Esophagus squamous epithelium (tissue), 5 donors: ENCODE measurements at regions of chr9 and their contacts with region 1.

Region 1: GRCh38 chr9:136539427-136540421 is 6.1 kb downstream of the NOTCH1 start:
- DNase-seq: peak; percentile 86
- H3K4me3 ChIP-seq: peak overlapping the region in 3 of 4 donors; percentile 5 to 57 (median 22)
- H3K27ac ChIP-seq: peak overlapping the region; percentile 85 to 94 (median 92)
- H3K4me1 ChIP-seq: peaks cover 65 to 97% (median 89%) of the 10 kb centered on the region in 3 donors
- H3K27me3 ChIP-seq: no peaks in the 10 kb centered on the region
- CTCF ChIP-seq: no peak
- POLR2A ChIP-seq: peak in 1 of 4 donors; percentile 62

Region 2: DNA sequence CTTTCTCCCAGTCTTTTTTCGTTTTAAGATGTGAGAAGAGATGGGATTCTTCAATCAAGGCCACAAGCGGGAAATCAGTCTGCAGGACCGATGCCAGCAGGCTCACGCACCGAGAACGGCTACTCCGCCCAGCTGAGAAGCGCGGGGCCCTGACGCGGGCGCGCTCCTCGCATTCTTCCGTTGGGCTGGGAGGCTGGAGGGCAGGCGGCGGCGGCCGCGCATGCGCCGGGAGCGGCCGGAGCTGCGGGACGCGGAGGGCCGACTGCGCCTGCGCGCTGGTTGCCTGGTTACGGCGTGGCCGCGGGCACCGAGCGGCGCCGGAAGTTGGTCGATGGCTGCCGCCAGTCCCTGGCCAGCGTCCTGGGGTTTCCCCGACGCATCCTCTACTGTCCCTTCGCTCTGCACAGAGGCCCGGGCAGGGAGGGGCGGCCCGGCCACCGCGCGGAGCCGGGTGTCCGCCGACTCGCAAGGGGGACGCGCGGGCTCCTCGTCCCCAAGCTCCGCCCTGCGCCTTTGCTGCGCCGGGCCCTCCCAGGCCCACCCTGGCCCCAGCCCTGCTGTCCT is 56.1 kb before region 1 on chr9:
- intact Hi-C with region 1: loop called (anchors 5 kb)
- DNase-seq: peak; percentile 79
- H3K4me3 ChIP-seq: peak overlapping the region; percentile 46 to 99 (median 79)
- H3K27ac ChIP-seq: peak overlapping the region; percentile 99 to 100 (median 100)
- H3K4me1 ChIP-seq: peaks cover 25 to 54% (median 28%) of the 10 kb centered on the region in 3 donors
- H3K27me3 ChIP-seq: peaks cover 0 to 9% (median 0%) of the 10 kb centered on the region in 4 donors
- CTCF ChIP-seq: peak in 1 of 6 experiments; percentile 11
- POLR2A ChIP-seq: peak in 3 of 4 donors; percentile 42 to 75 (median 73)

Region 3: GRCh38 chr9:136694236-136694942 is 154.7 kb after region 1 on chr9:
- intact Hi-C with region 1: no loop called
- DNase-seq: no peak
- H3K4me3 ChIP-seq: peak overlapping the region in 2 of 4 donors; percentile 7 to 26
- H3K27ac ChIP-seq: peak overlapping the region; percentile 72 to 89 (median 76)
- H3K4me1 ChIP-seq: peaks cover 25 to 76% (median 33%) of the 10 kb centered on the region in 3 donors
- H3K27me3 ChIP-seq: peaks cover 0 to 32% (median 0%) of the 10 kb centered on the region in 4 donors
- CTCF ChIP-seq: peak in 5 of 6 experiments; percentile 68 to 82 (median 72)
- POLR2A ChIP-seq: no peak